Ascending aorta (tissue), 2 donors: ENCODE measurements at regions of chr4 and their contacts with region 1.

Region 1: GRCh38 chr4:41360214-41360920 is 103.6 kb downstream of the UCHL1 start:
- DNase-seq: peak; percentile 12 to 87
- H3K4me3 ChIP-seq: peak overlapping the region; percentile 88 to 98
- H3K27ac ChIP-seq: peak overlapping the region; percentile 91 to 96
- H3K4me1 ChIP-seq: peaks cover 12 to 32% of the 10 kb centered on the region in 2 donors
- H3K27me3 ChIP-seq: no peaks in the 10 kb centered on the region
- CTCF ChIP-seq: no peak

Region 2: DNA sequence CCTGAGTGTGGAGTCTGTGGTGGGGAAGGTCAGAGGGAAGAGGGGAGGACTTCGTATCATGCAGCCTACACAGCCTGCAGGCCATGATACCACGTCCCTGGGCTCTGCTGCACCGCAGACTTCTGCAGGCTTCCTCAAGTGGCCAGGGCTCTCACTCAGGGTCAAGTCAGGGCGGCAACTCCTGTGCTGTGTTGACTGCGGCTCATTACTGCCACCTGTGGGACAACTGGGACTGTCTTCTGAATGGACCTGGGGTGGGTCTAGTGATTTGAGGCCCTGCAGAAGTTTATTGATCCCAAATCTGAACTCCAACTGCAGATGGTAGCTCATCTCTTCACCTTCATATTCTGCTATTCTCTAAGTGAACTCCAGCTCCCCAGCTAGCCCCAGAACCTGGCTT is 443.5 kb before region 1 on chr4:
- intact Hi-C with region 1: loop called (anchors 10 kb)
- DNase-seq: peak in 1 of 2 donors; percentile 75
- H3K4me3 ChIP-seq: peak overlapping the region in 1 of 2 donors; percentile 0
- H3K27ac ChIP-seq: peak overlapping the region; percentile 78 to 89
- H3K4me1 ChIP-seq: peaks cover 13 to 44% of the 10 kb centered on the region in 2 donors
- H3K27me3 ChIP-seq: no peaks in the 10 kb centered on the region
- CTCF ChIP-seq: peak; percentile 58 to 63 (median 58)

Region 3: GRCh38 chr4:41281038-41281634 is 79.2 kb before region 1 on chr4:
- intact Hi-C with region 1: loop called (anchors 5 kb)
- DNase-seq: peak in 1 of 2 donors; percentile 67
- H3K4me3 ChIP-seq: no peak overlapping the region
- H3K27ac ChIP-seq: no peak overlapping the region
- H3K4me1 ChIP-seq: no peaks in the 10 kb centered on the region
- H3K27me3 ChIP-seq: no peaks in the 10 kb centered on the region
- CTCF ChIP-seq: peak; percentile 81 to 87 (median 83)

Region 4: DNA sequence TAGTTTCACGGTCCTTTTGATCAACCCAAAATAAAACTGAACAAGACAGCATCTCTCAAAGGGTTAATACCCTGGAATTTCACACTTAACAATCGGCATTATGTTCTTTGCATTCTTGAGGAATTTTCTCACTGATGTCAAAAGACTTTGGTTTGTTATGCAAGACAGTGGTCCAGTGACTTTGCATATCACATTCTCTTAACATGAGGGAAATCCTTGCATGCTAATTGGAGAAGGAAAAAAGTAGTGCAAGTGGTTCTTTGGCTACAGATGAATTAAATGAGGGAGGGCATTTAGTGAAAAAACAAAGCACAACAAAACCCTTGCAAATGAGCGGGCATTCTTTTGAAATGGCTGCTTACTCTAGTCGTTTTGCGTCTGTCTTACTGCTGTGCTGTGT is 72.5 kb after region 1 on chr4:
- intact Hi-C with region 1: loop called (anchors 5 kb)
- DNase-seq: no peak
- H3K4me3 ChIP-seq: no peak overlapping the region
- H3K27ac ChIP-seq: peak overlapping the region; percentile 67 to 78
- H3K4me1 ChIP-seq: peaks cover 16 to 54% of the 10 kb centered on the region in 2 donors
- H3K27me3 ChIP-seq: no peaks in the 10 kb centered on the region
- CTCF ChIP-seq: no peak

Region 5: DNA sequence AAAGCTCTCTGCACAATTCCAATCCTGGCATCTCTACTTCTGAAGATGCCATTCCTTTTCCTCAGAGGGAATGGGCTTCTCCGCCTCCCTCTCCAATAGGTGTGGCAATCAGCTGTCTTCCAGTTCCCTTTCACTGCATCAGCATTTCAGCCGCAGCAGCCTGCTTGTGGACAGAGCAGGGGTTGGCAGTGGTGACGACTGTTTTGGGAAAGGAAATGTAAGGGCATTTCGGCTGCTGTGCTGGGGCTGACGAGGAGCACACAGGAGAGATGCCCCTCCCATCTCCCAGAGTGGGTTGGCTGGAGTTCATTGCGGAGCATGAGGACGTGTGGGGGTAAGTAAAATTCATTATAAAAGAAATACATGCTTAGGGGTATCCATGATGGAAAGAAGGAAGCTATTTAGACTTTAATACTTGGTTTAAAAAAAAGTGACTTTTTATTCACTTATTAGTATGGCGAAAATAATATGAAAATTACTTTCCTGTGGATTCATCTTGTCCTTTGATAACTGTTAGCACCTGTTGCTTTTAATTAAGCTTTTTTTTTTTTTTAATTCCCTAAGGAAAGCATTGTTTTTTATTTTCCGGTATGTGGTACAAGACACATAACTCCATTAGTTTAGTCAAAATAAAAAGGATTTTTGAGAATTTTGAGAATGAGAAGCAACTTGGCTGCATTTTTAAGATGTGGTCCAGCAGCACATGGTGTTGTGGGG is 177.8 kb after region 1 on chr4 and contains the start of gene LIMCH1:
- intact Hi-C with region 1: loop called (anchors 2 kb)
- DNase-seq: peak; percentile 62 to 91
- H3K4me3 ChIP-seq: peak within 1 kb of the TSS in 1 of 2 donors; percentile 54
- H3K27ac ChIP-seq: peak within 1 kb of the TSS; percentile 90 to 91
- H3K4me1 ChIP-seq: peaks cover 32 to 70% of the 10 kb centered on the region in 2 donors
- H3K27me3 ChIP-seq: no peaks in the 10 kb centered on the region
- CTCF ChIP-seq: no peak
- total RNA-seq, gene LIMCH1: 44.4 TPM

Region 6: GRCh38 chr4:41644288-41644914 is 284.0 kb after region 1 on chr4:
- intact Hi-C with region 1: loop called (anchors 5 kb)
- DNase-seq: peak in 1 of 2 donors; percentile 86
- H3K4me3 ChIP-seq: peak overlapping the region; percentile 34 to 50
- H3K27ac ChIP-seq: no peak overlapping the region
- H3K4me1 ChIP-seq: peaks cover 2 to 24% of the 10 kb centered on the region in 2 donors
- H3K27me3 ChIP-seq: no peaks in the 10 kb centered on the region
- CTCF ChIP-seq: peak; percentile 83 to 96 (median 89)